ENCODE measurements at regions of chr19 and their contacts with region 1.

Region 1: GRCh38 chr19:43519436-43520088 is 7.4 kb downstream of the ETHE1 start:
- DNase-seq: peak; percentile 85
- H3K4me3 ChIP-seq: no peak overlapping the region
- CTCF ChIP-seq: peak; percentile 81

Region 2: GRCh38 chr19:43362179-43362578 is 157.4 kb before region 1 on chr19:
- CTCF ChIA-PET with region 1: no interaction called
- POLR2A ChIA-PET with region 1: no interaction called
- DNase-seq: no peak
- H3K4me3 ChIP-seq: no peak overlapping the region
- CTCF ChIP-seq: no peak

Region 3: GRCh38 chr19:43438291-43439096 is 81.1 kb before region 1 on chr19:
- CTCF ChIA-PET with region 1: interaction called, 609 read pairs
- POLR2A ChIA-PET with region 1: no interaction called
- DNase-seq: no peak
- H3K4me3 ChIP-seq: no peak overlapping the region
- CTCF ChIP-seq: no peak

Region 4: GRCh38 chr19:43463381-43464136 is 56.0 kb before region 1 on chr19:
- CTCF ChIA-PET with region 1: interaction called, 27 read pairs
- POLR2A ChIA-PET with region 1: no interaction called
- DNase-seq: no peak
- H3K4me3 ChIP-seq: peak overlapping the region; percentile 82
- CTCF ChIP-seq: no peak

Region 5: GRCh38 chr19:43503501-43504425 is 15.8 kb before region 1 on chr19:
- CTCF ChIA-PET with region 1: interaction called, 13 read pairs
- POLR2A ChIA-PET with region 1: interaction called, 3 read pairs
- DNase-seq: peak; percentile 29
- H3K4me3 ChIP-seq: peak overlapping the region; percentile 85
- CTCF ChIP-seq: no peak

Region 6: GRCh38 chr19:43544077-43544476 is 24.5 kb after region 1 on chr19:
- CTCF ChIA-PET with region 1: no interaction called
- POLR2A ChIA-PET with region 1: no interaction called
- DNase-seq: no peak
- H3K4me3 ChIP-seq: no peak overlapping the region
- CTCF ChIP-seq: no peak

Region 7: GRCh38 chr19:43595999-43596841 is 76.7 kb after region 1 on chr19 and contains the starts of genes IRGQ and ZNF576:
- CTCF ChIA-PET with region 1: interaction called, 11 read pairs
- POLR2A ChIA-PET with region 1: no interaction called
- DNase-seq: peak; percentile 90
- H3K4me3 ChIP-seq: peak within 1 kb of the TSS; percentile 79
- CTCF ChIP-seq: no peak

Measured in AG04449 (cell line).